GM12878 (cell line): ENCODE measurements at regions of chr16 and their contacts with region 1.

Region 1: DNA sequence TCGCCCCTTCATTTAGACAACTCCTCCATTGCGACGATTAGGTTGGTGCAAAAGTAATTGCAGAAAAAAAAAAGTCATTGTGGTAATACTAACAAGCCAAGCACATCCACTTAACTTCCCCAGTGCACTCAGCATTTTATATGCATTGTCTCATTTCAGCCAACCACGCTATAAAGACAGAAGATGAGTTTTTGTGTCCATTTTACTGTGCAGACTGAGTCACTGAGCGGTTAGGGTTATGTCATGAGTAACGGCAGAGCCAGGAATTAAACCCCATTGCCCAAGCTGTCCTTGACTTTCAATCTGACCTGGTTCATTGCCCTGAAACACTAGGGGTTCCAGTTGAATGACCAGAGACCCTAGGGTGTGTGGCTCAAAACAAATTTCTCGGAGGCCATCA is 218.7 kb downstream of the XYLT1 start:
- DNase-seq: no peak
- ATAC-seq: peak; percentile 83
- H3K4me3 ChIP-seq: no peak overlapping the region
- H3K27ac ChIP-seq: no peak overlapping the region
- H3K4me1 ChIP-seq: peaks cover 13% of the 10 kb centered on the region
- H3K27me3 ChIP-seq: no peaks in the 10 kb centered on the region
- CTCF ChIP-seq: no peak
- EP300 ChIP-seq: no peak
- POLR2A ChIP-seq: no peak
- RAD21 ChIP-seq: no peak

Region 2: GRCh38 chr16:17116595-17117296 is 135.3 kb before region 1 on chr16:
- CTCF ChIA-PET with region 1: no interaction called
- POLR2A ChIA-PET with region 1: no interaction called
- RAD21 ChIA-PET with region 1: no interaction called
- SMC1A ChIA-PET with region 1: no interaction called
- in situ Hi-C with region 1: no loop called
- intact Hi-C with region 1: no loop called
- DNase-seq: no peak
- ATAC-seq: no peak
- H3K4me3 ChIP-seq: no peak overlapping the region
- H3K27ac ChIP-seq: no peak overlapping the region
- H3K4me1 ChIP-seq: no peaks in the 10 kb centered on the region
- H3K27me3 ChIP-seq: no peaks in the 10 kb centered on the region
- CTCF ChIP-seq: no peak
- EP300 ChIP-seq: no peak
- POLR2A ChIP-seq: no peak
- RAD21 ChIP-seq: no peak

Region 3: DNA sequence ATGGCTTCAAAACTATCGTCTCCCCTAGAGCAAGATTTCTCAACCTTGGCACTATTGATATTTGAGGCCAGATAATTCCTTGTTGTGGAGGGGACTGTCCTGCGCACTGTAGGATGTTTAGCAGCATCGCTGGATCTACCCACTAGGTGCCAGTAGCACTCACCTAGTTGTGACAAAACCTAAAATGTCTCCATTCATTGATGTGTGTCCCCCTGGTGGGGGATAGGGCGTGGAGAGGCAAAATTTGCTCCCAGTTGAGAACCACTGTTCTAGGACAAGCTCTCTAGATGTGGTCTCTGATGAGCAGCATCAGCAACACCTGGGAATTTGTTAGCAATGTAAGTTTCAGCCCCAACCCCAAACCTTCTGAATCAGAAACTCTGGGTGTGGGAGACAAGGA is 40.3 kb before region 1 on chr16:
- CTCF ChIA-PET with region 1: interaction called, 4 read pairs
- POLR2A ChIA-PET with region 1: no interaction called
- RAD21 ChIA-PET with region 1: no interaction called
- SMC1A ChIA-PET with region 1: interaction called, 4 read pairs
- in situ Hi-C with region 1: no loop called
- intact Hi-C with region 1: loop called (anchors 2 kb)
- DNase-seq: no peak
- ATAC-seq: peak; percentile 88
- H3K4me3 ChIP-seq: no peak overlapping the region
- H3K27ac ChIP-seq: no peak overlapping the region
- H3K4me1 ChIP-seq: no peaks in the 10 kb centered on the region
- H3K27me3 ChIP-seq: no peaks in the 10 kb centered on the region
- CTCF ChIP-seq: peak; percentile 57 to 62 (median 62); a peak in 5 of 6 replicates
- EP300 ChIP-seq: no peak
- POLR2A ChIP-seq: no peak
- RAD21 ChIP-seq: peak; percentile 61

Region 4: GRCh38 chr16:17321824-17322223 is 69.8 kb after region 1 on chr16:
- CTCF ChIA-PET with region 1: no interaction called
- POLR2A ChIA-PET with region 1: no interaction called
- RAD21 ChIA-PET with region 1: no interaction called
- SMC1A ChIA-PET with region 1: no interaction called
- in situ Hi-C with region 1: no loop called
- intact Hi-C with region 1: no loop called
- DNase-seq: no peak
- ATAC-seq: no peak
- H3K4me3 ChIP-seq: no peak overlapping the region
- H3K27ac ChIP-seq: no peak overlapping the region
- H3K4me1 ChIP-seq: no peaks in the 10 kb centered on the region; the same call in 1 of the 2 replicates
- H3K27me3 ChIP-seq: no peaks in the 10 kb centered on the region
- CTCF ChIP-seq: no peak
- EP300 ChIP-seq: no peak
- POLR2A ChIP-seq: no peak
- RAD21 ChIP-seq: no peak

Region 5: DNA sequence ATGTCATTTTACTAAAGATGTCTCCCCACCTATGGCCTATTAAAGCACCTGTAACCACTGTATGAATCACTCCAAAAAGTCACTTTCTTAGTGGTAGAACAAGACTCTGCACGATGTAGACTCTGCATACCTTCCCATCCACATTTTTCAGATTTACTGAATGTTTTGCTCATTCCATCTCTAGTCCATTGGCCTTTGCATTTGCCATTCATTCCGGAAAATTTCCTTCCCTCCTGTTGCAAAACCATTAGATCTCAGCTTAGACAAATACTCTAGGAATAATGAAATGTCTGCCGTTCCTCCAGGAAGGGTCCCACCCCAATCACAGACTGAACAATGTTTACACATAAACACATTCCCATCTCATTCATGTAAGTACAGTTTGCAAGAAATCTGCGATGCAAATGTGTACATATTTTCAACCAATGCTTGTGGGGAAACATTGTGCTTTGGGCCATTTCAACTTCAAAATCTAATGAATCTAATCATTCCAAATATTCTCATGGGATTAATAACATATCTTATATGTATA is 365.0 kb after region 1 on chr16:
- CTCF ChIA-PET with region 1: no interaction called
- POLR2A ChIA-PET with region 1: no interaction called
- RAD21 ChIA-PET with region 1: no interaction called
- SMC1A ChIA-PET with region 1: no interaction called
- in situ Hi-C with region 1: no loop called
- intact Hi-C with region 1: no loop called
- DNase-seq: no peak
- ATAC-seq: no peak
- H3K4me3 ChIP-seq: no peak overlapping the region
- H3K27ac ChIP-seq: no peak overlapping the region
- H3K4me1 ChIP-seq: no peaks in the 10 kb centered on the region
- H3K27me3 ChIP-seq: no peaks in the 10 kb centered on the region; a peak in 2 of 4 replicates
- CTCF ChIP-seq: no peak
- EP300 ChIP-seq: no peak
- POLR2A ChIP-seq: no peak
- RAD21 ChIP-seq: no peak